Cardiac septum (tissue), 1 donor: ENCODE measurements at regions of chr10 and their contacts with region 1.

Region 1: DNA sequence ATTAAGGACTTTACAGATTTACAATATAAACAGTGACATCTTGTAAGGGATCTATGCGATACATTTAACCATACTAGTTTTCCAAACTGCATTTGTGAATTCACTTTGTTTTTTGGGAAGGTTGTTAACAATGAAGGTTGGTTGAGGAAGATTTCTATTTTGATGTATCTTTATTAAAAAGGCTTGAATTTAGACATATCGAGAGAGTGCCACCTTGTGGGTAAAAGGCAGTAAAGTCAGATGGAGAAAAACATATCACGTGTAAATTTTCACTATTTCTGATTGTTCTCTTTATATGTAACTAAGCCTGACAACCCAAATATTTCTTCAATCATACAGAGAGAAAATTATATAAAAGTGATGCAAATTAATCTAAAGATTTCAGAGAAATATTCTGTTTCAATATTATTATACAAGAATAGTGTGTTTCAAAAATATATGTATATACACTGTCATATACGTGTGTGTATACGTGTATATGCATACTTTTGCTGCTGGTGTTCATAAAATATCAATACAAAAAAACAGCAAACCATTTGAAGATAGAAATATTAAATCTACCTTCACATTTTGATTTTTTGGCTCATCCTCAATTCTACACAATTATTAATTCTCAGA is 988.6 kb downstream of the SORCS1 start:
- DNase-seq: no peak

Region 2: GRCh38 chr10:105063796-105064195 is 1112.1 kb before region 1 on chr10:
- intact Hi-C with region 1: loop called (anchors 10 kb)
- DNase-seq: no peak

Region 3: GRCh38 chr10:105950410-105950809 is 225.5 kb before region 1 on chr10:
- intact Hi-C with region 1: loop called (anchors 10 kb)
- DNase-seq: no peak

Region 4: DNA sequence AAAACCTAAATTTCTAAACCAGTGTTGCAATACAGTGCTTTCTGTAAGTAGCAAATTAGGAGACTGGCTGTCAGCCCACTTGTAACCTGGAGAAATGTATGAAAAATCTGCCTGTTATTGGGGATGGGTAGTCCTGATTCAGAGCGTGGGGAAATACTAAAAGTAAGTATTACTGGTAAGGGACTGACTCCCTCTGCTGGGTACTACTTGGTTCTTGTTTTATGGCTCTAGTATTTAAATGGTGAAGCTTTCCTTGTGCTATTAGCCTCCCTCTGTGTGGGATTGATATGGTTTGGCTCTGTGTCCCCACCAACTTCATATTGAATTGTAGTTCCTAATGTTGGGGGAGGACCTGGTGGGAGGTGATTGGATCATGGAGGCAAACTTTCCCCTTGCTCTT is 102.5 kb after region 1 on chr10:
- intact Hi-C with region 1: no loop called
- DNase-seq: no peak

Region 5: DNA sequence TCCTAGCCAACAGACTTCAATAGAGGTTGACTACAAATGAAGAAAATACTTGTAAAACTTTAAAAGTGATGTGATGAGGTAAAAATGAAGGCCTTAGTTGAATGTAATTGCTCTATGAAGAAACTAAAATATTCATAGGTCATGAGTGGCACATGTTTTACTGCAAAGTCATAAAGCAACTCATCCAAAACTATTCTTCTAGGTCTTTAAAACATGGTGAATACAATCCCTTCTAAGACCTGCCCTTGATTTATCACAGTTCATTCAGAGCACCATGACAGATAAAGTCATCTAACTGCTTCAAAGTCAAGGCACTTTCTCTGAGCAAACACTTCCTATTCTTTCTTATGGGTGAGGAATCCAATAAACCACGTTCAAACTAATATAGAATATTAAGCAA is 275.1 kb after region 1 on chr10:
- intact Hi-C with region 1: no loop called
- DNase-seq: no peak